CD8-positive, alpha-beta T cell (primary cell): ENCODE measurements at regions of chrX and their contacts with region 1.

Region 1: DNA sequence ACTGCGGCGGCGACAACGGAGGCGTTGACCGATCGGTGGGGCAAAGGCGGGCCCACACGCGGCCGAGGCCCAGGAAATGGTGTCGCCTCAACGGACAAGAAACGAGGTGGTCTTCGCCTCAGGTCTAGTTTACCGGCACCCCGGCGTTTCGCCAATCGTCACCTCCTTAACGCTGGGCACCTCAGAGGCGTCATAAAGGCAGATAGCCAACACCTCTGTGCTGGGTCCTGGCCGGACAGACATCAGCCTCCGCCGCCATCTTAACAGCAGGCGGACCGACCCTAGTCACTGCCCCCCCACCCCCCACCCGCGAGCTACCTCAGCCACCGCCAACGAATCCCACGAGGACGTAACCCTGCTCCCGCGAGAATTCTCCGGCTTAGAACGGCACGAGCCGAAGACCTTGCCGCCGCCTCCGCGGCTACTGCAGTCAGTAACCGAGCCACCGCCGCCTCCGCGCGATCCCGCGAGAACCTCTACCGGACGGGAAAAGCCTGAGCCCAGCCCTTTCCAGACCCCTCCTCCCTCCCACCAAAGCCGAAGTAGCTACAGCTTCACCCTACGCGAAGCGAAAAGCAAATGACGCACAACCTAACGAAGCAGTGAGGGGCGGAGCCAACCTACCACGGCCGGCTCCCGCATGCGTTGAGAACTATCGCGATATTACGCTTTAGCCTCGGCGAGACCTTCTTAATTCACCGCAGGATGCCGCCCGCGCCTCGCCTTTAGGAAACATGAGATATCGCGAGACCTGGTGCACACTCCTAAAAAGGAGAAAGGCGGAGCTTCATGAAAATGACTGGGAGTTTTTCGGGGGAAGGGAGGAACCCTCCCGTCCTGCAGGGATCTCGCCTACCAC is 2.7 kb downstream of the HUWE1 start:
- DNase-seq: peak; percentile 75 to 98 (median 86)
- ATAC-seq: peak; percentile 78
- H3K4me3 ChIP-seq: peak overlapping the region; percentile 76 to 86
- H3K4me3 Mint-ChIP-seq: peak overlapping the region; percentile 88
- H3K27ac ChIP-seq: peak overlapping the region; percentile 94 to 97
- H3K27ac Mint-ChIP-seq: peak overlapping the region; percentile 97
- H3K4me1 ChIP-seq: peaks cover 31% of the 10 kb centered on the region
- H3K4me1 Mint-ChIP-seq: peaks cover 49% of the 10 kb centered on the region
- H3K27me3 ChIP-seq: no peaks in the 10 kb centered on the region
- H3K27me3 Mint-ChIP-seq: no peaks in the 10 kb centered on the region
- CTCF ChIP-seq: no peak

Region 2: DNA sequence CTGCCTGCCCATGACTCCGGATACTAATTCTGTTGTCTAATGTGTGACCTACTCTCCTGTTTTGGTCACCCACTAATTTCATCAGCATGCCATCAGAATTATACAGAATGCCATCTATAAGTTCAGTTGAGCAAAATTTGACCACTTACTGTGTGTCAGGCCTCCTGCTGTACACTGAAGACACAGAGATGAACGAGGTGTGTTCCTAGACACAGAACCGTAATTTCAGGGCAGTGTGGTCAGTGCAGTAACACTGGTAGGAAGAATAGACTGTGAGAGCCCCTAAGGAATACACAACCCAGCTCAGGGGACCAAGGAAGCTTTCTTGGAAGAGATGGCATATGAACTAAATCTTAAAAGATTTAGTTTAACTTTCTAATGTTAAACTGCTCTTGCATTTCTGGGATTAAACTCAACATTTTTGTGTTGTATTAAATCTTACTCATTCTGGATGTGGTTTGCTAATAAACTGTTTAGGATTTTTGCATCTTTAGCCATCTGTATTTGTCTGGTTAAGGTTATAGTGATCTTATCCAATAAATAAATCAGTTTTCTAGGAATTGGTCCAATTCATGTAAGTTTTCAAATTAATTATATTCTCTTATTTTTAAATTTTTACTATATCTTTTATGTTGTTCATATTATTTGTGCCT is 555.6 kb before region 1 on chrX:
- CTCF ChIA-PET with region 1: no interaction called
- POLR2A ChIA-PET with region 1: no interaction called
- intact Hi-C with region 1: no loop called
- DNase-seq: no peak
- ATAC-seq: no peak
- H3K4me3 ChIP-seq: no peak overlapping the region
- H3K4me3 Mint-ChIP-seq: no peak overlapping the region
- H3K27ac ChIP-seq: no peak overlapping the region
- H3K27ac Mint-ChIP-seq: no peak overlapping the region
- H3K4me1 ChIP-seq: no peaks in the 10 kb centered on the region
- H3K4me1 Mint-ChIP-seq: peaks cover 23% of the 10 kb centered on the region
- H3K27me3 ChIP-seq: no peaks in the 10 kb centered on the region
- H3K27me3 Mint-ChIP-seq: no peaks in the 10 kb centered on the region
- CTCF ChIP-seq: no peak

Region 3: GRCh38 chrX:53422086-53422860 is 261.5 kb before region 1 on chrX and contains the start of gene SMC1A:
- CTCF ChIA-PET with region 1: no interaction called
- POLR2A ChIA-PET with region 1: interaction called, 4 read pairs
- intact Hi-C with region 1: loop called (anchors 5 to 10 kb)
- DNase-seq: peak; percentile 86 to 98 (median 96)
- ATAC-seq: peak; percentile 89
- H3K4me3 ChIP-seq: peak within 1 kb of the TSS; percentile 92 to 94
- H3K4me3 Mint-ChIP-seq: peak within 1 kb of the TSS; percentile 94
- H3K27ac ChIP-seq: peak within 1 kb of the TSS; percentile 95 to 99
- H3K27ac Mint-ChIP-seq: peak within 1 kb of the TSS; percentile 95
- H3K4me1 ChIP-seq: peaks cover 18% of the 10 kb centered on the region
- H3K4me1 Mint-ChIP-seq: peaks cover 33% of the 10 kb centered on the region
- H3K27me3 ChIP-seq: no peaks in the 10 kb centered on the region
- H3K27me3 Mint-ChIP-seq: no peaks in the 10 kb centered on the region
- CTCF ChIP-seq: no peak
- total RNA-seq, gene SMC1A: 23.7 to 25.3 TPM

Region 4: GRCh38 chrX:53714580-53715345 is 31.0 kb after region 1 on chrX:
- CTCF ChIA-PET with region 1: no interaction called
- POLR2A ChIA-PET with region 1: interaction called, 21 read pairs
- intact Hi-C with region 1: loop called (anchors 1 kb)
- DNase-seq: peak in 8 of 9 experiments; percentile 18 to 89 (median 60)
- ATAC-seq: peak; percentile 71
- H3K4me3 ChIP-seq: peak overlapping the region; percentile 30 to 32
- H3K4me3 Mint-ChIP-seq: peak overlapping the region; percentile 78
- H3K27ac ChIP-seq: peak overlapping the region; percentile 54 to 94
- H3K27ac Mint-ChIP-seq: peak overlapping the region; percentile 96
- H3K4me1 ChIP-seq: peaks cover 48% of the 10 kb centered on the region
- H3K4me1 Mint-ChIP-seq: peaks cover 48% of the 10 kb centered on the region
- H3K27me3 ChIP-seq: no peaks in the 10 kb centered on the region
- H3K27me3 Mint-ChIP-seq: no peaks in the 10 kb centered on the region
- CTCF ChIP-seq: no peak

Region 5: GRCh38 chrX:53743244-53743643 is 59.5 kb after region 1 on chrX:
- CTCF ChIA-PET with region 1: no interaction called
- POLR2A ChIA-PET with region 1: no interaction called
- intact Hi-C with region 1: no loop called
- DNase-seq: no peak
- ATAC-seq: no peak
- H3K4me3 ChIP-seq: no peak overlapping the region
- H3K4me3 Mint-ChIP-seq: no peak overlapping the region
- H3K27ac ChIP-seq: no peak overlapping the region
- H3K27ac Mint-ChIP-seq: no peak overlapping the region
- H3K4me1 ChIP-seq: no peaks in the 10 kb centered on the region
- H3K4me1 Mint-ChIP-seq: no peaks in the 10 kb centered on the region
- H3K27me3 ChIP-seq: no peaks in the 10 kb centered on the region
- H3K27me3 Mint-ChIP-seq: no peaks in the 10 kb centered on the region
- CTCF ChIP-seq: no peak

Region 6: DNA sequence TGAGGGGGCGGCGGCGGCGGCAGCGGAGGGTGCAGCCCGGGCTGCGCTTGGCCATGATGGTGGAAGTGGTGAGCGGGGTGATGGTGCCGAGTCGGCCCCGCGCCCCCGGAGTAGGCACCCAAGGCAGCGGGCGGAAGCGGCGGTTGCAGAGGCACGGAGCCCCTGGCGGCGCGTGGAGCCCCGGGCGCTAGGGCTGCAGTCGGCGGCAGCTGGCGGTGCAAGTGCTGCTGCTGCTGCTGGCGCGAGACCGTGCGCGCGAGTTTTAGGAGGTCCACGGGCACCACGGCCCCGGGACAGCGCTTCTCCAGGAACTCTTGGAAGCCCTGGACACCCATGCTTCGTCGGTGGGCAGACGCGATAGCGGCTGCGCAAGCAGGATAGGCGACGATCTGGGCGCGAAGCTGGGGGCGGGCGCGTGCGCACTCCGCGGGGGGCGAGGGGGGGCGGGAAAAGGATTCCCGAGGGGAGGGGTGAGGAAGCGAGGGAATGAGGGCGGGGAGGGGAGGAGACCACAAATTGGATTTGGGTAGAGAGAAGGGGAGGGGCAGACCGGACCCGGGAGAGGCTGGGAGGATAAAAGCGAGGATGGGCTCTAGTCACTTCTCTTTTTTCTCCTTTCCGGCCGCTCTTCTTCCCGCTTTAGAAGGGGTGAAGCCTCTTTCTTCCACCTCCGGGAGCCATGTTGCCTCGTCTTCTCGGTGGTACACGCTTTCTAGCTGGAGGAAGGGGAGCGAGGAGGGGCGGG is 499.3 kb after region 1 on chrX and contains the start of gene FAM120C:
- CTCF ChIA-PET with region 1: no interaction called
- POLR2A ChIA-PET with region 1: no interaction called
- intact Hi-C with region 1: loop called in 1 of 2 experiments (anchors 2 kb)
- DNase-seq: peak; percentile 26 to 83 (median 59)
- ATAC-seq: peak; percentile 70
- H3K4me3 ChIP-seq: peak within 1 kb of the TSS; percentile 60 to 72
- H3K4me3 Mint-ChIP-seq: peak within 1 kb of the TSS; percentile 78
- H3K27ac ChIP-seq: peak within 1 kb of the TSS; percentile 75 to 83
- H3K27ac Mint-ChIP-seq: peak within 1 kb of the TSS; percentile 88
- H3K4me1 ChIP-seq: peaks cover 38% of the 10 kb centered on the region
- H3K4me1 Mint-ChIP-seq: peaks cover 43% of the 10 kb centered on the region
- H3K27me3 ChIP-seq: no peaks in the 10 kb centered on the region
- H3K27me3 Mint-ChIP-seq: no peaks in the 10 kb centered on the region
- CTCF ChIP-seq: no peak
- total RNA-seq, gene FAM120C: 10.9 to 11.1 TPM

Region 7: GRCh38 chrX:54397113-54397512 is 713.3 kb after region 1 on chrX:
- CTCF ChIA-PET with region 1: no interaction called
- POLR2A ChIA-PET with region 1: no interaction called
- intact Hi-C with region 1: no loop called
- DNase-seq: no peak
- ATAC-seq: no peak
- H3K4me3 ChIP-seq: no peak overlapping the region
- H3K4me3 Mint-ChIP-seq: no peak overlapping the region
- H3K27ac ChIP-seq: no peak overlapping the region
- H3K27ac Mint-ChIP-seq: no peak overlapping the region
- H3K4me1 ChIP-seq: no peaks in the 10 kb centered on the region
- H3K4me1 Mint-ChIP-seq: no peaks in the 10 kb centered on the region
- H3K27me3 ChIP-seq: peaks cover 0 to 3% of the 10 kb centered on the region in 2 experiments
- H3K27me3 Mint-ChIP-seq: peaks cover 1% of the 10 kb centered on the region
- CTCF ChIP-seq: no peak

Region 8: GRCh38 chrX:54529552-54530357 is 846.0 kb after region 1 on chrX and contains the start of gene GNL3L:
- CTCF ChIA-PET with region 1: no interaction called
- POLR2A ChIA-PET with region 1: no interaction called
- intact Hi-C with region 1: loop called (anchors 5 to 10 kb)
- DNase-seq: peak; percentile 55 to 89 (median 78)
- ATAC-seq: peak; percentile 83
- H3K4me3 ChIP-seq: peak within 1 kb of the TSS; percentile 85 to 95
- H3K4me3 Mint-ChIP-seq: peak within 1 kb of the TSS; percentile 97
- H3K27ac ChIP-seq: peak within 1 kb of the TSS; percentile 79 to 94
- H3K27ac Mint-ChIP-seq: peak within 1 kb of the TSS; percentile 97
- H3K4me1 ChIP-seq: peaks cover 22% of the 10 kb centered on the region
- H3K4me1 Mint-ChIP-seq: peaks cover 40% of the 10 kb centered on the region
- H3K27me3 ChIP-seq: no peaks in the 10 kb centered on the region
- H3K27me3 Mint-ChIP-seq: no peaks in the 10 kb centered on the region
- CTCF ChIP-seq: no peak
- total RNA-seq, gene GNL3L: 20.9 to 24.0 TPM